ENCODE measurements at regions of chr11 and their contacts with region 1.

Region 1: DNA sequence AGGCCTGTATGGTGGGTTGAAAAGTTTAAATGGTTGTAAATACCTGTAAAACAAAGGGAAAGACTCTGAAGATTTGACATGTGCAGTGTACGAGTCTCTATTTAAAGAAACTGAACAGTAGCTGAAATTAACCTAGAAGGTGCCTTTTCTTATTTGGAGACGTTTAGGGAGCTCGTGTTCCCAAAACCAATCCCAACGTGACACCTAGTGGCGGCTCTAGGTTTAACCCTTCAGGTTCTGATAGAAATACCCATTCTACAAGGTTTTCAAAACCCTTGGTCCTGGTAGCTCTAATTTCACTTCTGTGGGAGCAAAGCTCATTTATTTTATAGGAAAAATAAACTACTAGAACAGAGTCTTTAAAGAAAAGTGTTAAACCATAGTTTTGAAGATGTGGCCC is 258.3 kb downstream of the LRRC4C start:
- DNase-seq: peak; percentile 86
- H3K4me3 ChIP-seq: no peak overlapping the region
- H3K27ac ChIP-seq: no peak overlapping the region
- H3K4me1 ChIP-seq: no peaks in the 10 kb centered on the region
- H3K27me3 ChIP-seq: no peaks in the 10 kb centered on the region
- CTCF ChIP-seq: peak; percentile 90

Region 2: GRCh38 chr11:40149721-40150120 is 1051.4 kb before region 1 on chr11:
- CTCF ChIA-PET with region 1: no interaction called
- POLR2A ChIA-PET with region 1: no interaction called
- intact Hi-C with region 1: loop called (anchors 5 kb)
- DNase-seq: no peak
- H3K4me3 ChIP-seq: no peak overlapping the region
- H3K27ac ChIP-seq: no peak overlapping the region
- H3K4me1 ChIP-seq: no peaks in the 10 kb centered on the region
- H3K27me3 ChIP-seq: no peaks in the 10 kb centered on the region
- CTCF ChIP-seq: no peak

Region 3: GRCh38 chr11:40306938-40307548 is 894.1 kb before region 1 on chr11:
- CTCF ChIA-PET with region 1: interaction called, 10 read pairs
- POLR2A ChIA-PET with region 1: no interaction called
- intact Hi-C with region 1: loop called (anchors 2 kb)
- DNase-seq: peak; percentile 87
- H3K4me3 ChIP-seq: no peak overlapping the region
- H3K27ac ChIP-seq: no peak overlapping the region
- H3K4me1 ChIP-seq: peaks cover 9% of the 10 kb centered on the region
- H3K27me3 ChIP-seq: no peaks in the 10 kb centered on the region
- CTCF ChIP-seq: peak; percentile 99

Region 4: GRCh38 chr11:40722179-40722795 is 478.9 kb before region 1 on chr11:
- CTCF ChIA-PET with region 1: no interaction called
- POLR2A ChIA-PET with region 1: no interaction called
- intact Hi-C with region 1: loop called (anchors 2 kb)
- DNase-seq: peak; percentile 89
- H3K4me3 ChIP-seq: no peak overlapping the region
- H3K27ac ChIP-seq: no peak overlapping the region
- H3K4me1 ChIP-seq: no peaks in the 10 kb centered on the region
- H3K27me3 ChIP-seq: no peaks in the 10 kb centered on the region
- CTCF ChIP-seq: peak; percentile 99

Region 5: DNA sequence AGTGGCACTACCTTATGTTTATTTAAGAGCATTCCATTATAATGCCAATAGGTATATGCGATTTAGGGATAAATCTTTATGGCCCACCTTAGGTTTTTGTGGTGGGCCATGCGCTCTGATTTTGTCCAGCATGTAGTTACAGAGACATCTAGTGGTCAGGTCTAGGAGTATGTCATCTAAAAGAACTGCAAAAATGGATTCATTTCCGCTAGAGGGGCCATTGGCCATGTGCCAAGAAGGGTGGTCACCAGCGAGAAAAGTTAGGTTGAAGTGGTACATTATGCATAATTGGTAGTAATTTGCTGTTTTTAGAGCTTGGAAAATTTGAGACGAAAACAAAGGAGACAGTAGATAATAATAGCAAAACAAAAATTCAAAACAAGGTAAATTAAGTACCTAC is 230.6 kb after region 1 on chr11:
- CTCF ChIA-PET with region 1: interaction called, 9 read pairs
- POLR2A ChIA-PET with region 1: no interaction called
- intact Hi-C with region 1: loop called (anchors 5 kb)
- DNase-seq: peak; percentile 76
- H3K4me3 ChIP-seq: no peak overlapping the region
- H3K27ac ChIP-seq: no peak overlapping the region
- H3K4me1 ChIP-seq: peaks cover 13% of the 10 kb centered on the region
- H3K27me3 ChIP-seq: no peaks in the 10 kb centered on the region
- CTCF ChIP-seq: peak; percentile 94

Measured in A673 (cell line).